Naive thymus-derived CD4-positive, alpha-beta T cell (primary cell): ENCODE measurements at regions of chr5 and their contacts with region 1.

Region 1: DNA sequence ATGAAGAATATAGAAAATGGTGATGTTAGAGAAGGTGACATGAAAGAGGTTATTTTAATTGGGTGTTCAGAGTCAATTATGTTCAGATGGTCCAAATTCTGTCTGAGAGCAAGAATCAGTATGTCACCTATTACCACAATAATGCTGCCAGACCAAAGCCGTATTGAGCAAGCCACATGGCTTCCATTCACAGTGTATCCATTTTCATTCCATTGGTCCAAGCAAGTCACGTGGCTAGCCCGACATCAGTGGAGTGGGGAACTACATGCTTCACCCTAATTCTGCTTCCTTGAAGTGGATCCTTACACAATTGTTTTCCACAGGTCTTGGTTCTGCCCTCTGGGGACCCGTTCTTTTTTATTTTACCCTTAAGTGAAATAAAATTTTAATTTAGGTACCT is 413.5 kb downstream of the EBF1 start:
- DNase-seq: no peak
- ATAC-seq: no peak
- H3K4me3 ChIP-seq: no peak overlapping the region
- H3K4me3 Mint-ChIP-seq: no peak overlapping the region
- H3K27ac ChIP-seq: no peak overlapping the region
- H3K27ac Mint-ChIP-seq: no peak overlapping the region
- H3K4me1 ChIP-seq: no peaks in the 10 kb centered on the region
- H3K4me1 Mint-ChIP-seq: no peaks in the 10 kb centered on the region
- H3K27me3 ChIP-seq: no peaks in the 10 kb centered on the region
- H3K27me3 Mint-ChIP-seq: peaks cover 0 to 13% (median 5%) of the 10 kb centered on the region in 5 donors

Region 2: DNA sequence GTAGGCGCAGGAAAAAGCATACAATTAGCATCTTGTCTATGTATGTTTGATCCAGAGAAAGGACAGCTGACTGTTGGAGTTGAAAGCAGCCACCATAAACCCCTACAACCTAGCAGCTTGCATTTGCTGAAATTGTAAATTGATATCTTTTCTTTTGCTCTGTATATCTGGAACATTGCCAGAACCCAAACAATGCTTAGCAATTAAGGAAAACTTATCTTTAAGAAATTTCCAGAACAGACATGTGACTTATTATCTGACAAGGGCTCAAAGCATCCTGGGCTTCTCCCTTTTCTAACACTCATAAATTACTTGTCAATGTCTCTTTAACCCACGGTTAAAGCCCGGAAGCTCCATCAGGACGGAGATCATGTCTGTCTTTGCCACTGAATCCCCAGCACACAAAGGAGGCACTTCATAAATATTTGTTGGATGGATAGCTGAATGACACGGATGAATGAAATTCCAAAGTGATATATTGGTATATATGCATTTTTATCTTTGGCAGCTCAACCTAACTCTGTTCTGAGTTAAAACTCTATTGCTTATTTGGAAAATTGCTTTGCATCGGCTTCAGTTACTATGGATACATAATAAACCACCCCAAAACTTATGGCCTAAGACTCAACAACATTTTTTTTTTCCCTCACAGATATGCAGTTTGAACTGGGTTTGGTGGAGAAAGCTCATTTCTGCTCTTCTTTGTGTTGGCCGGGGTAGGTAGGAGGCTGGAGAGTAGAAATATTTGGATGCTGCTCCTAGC is 724.2 kb before region 1 on chr5:
- CTCF ChIA-PET with region 1: no interaction called
- POLR2A ChIA-PET with region 1: no interaction called
- intact Hi-C with region 1: loop called in 1 of 2 experiments (anchors 5 kb)
- DNase-seq: no peak
- ATAC-seq: no peak
- H3K4me3 ChIP-seq: no peak overlapping the region
- H3K4me3 Mint-ChIP-seq: no peak overlapping the region
- H3K27ac ChIP-seq: no peak overlapping the region
- H3K27ac Mint-ChIP-seq: peak overlapping the region in 1 of 9 donors; percentile 51
- H3K4me1 ChIP-seq: no peaks in the 10 kb centered on the region
- H3K4me1 Mint-ChIP-seq: no peaks in the 10 kb centered on the region
- H3K27me3 ChIP-seq: no peaks in the 10 kb centered on the region
- H3K27me3 Mint-ChIP-seq: peaks cover 0 to 23% (median 7%) of the 10 kb centered on the region in 5 donors

Region 3: GRCh38 chr5:158786390-158786789 is 100.2 kb after region 1 on chr5:
- CTCF ChIA-PET with region 1: no interaction called
- POLR2A ChIA-PET with region 1: no interaction called
- intact Hi-C with region 1: no loop called
- DNase-seq: no peak
- ATAC-seq: no peak
- H3K4me3 ChIP-seq: no peak overlapping the region
- H3K4me3 Mint-ChIP-seq: no peak overlapping the region
- H3K27ac ChIP-seq: no peak overlapping the region
- H3K27ac Mint-ChIP-seq: no peak overlapping the region
- H3K4me1 ChIP-seq: no peaks in the 10 kb centered on the region
- H3K4me1 Mint-ChIP-seq: peaks cover 0 to under 1% (median 0%) of the 10 kb centered on the region in 7 donors
- H3K27me3 ChIP-seq: no peaks in the 10 kb centered on the region
- H3K27me3 Mint-ChIP-seq: peaks cover 0 to 4% (median 0%) of the 10 kb centered on the region in 5 donors